ENCODE measurements at regions of chr18 and their contacts with region 1.

Region 1: GRCh38 chr18:7677001-7677400 is 109.9 kb downstream of the PTPRM start:
- DNase-seq: no peak

Region 2: GRCh38 chr18:7608781-7609201 is 68.2 kb before region 1 on chr18:
- intact Hi-C with region 1: loop called (anchors 5 kb)
- DNase-seq: no peak